GM12878 (cell line): ENCODE measurements at regions of chr3 and their contacts with region 1.

Region 1: GRCh38 chr3:44338010-44338827 is at the start of gene TCAIM:
- DNase-seq: peak; percentile 92
- ATAC-seq: peak; percentile 97
- H3K4me3 ChIP-seq: peak within 1 kb of the TSS; percentile 87
- H3K27ac ChIP-seq: peak within 1 kb of the TSS; percentile 95
- H3K4me1 ChIP-seq: no peaks in the 10 kb centered on the region
- H3K27me3 ChIP-seq: no peaks in the 10 kb centered on the region
- CTCF ChIP-seq: no peak
- EP300 ChIP-seq: 0 out of 4 replicates have a peak, but pooled peaks of 1 of the 2 experiments have one; percentile 15
- POLR2A ChIP-seq: peak; percentile 98
- RAD21 ChIP-seq: no peak
- polyA plus RNA-seq, gene TCAIM: 16.1 to 19.0 TPM

Region 2: DNA sequence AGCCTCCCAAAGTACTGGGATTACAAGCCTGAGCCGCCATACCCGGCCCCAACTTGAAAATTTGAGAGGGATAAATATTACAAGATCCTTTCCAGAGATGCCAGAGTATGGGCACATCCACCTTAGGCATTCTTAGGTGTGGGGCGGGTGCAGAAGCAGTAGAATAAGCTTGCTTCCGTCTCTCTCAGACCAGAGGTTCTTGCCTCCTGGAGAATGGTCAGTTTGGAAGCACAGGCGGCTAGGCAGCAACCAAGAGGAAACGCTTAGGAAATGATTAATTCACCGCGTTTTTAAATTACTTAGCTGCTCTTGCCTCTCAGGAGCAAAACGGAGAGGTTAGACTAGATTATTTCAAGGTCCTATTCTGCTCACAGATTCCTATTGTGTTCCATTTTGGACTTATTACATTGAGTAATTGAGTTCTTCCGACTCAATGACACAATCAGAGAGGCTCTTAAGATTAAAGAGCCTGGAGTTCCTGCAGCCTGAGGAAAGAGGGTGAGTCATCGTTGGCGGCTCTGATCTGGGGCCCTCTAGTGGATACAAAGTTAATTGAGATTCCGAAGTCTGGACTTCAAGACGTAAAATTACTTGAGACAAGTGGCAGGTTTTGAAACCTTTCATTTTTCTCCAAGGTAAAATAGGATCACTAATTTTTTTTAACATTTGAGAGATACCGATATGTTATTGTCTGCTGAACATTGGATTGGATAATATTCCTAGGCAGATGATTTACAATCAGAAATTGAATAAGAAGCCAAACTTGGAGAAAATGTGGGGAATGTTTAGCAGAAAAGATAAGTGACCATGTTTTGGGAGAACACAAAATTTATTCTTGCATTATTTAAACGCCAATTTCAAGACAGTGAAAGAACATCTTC is 102.4 kb before region 1 on chr3:
- CTCF ChIA-PET with region 1: no interaction called
- POLR2A ChIA-PET with region 1: no interaction called
- RAD21 ChIA-PET with region 1: no interaction called
- SMC1A ChIA-PET with region 1: no interaction called
- in situ Hi-C with region 1: no loop called
- intact Hi-C with region 1: no loop called
- DNase-seq: peak; percentile 11
- ATAC-seq: peak; percentile 90
- H3K4me3 ChIP-seq: no peak overlapping the region
- H3K27ac ChIP-seq: no peak overlapping the region
- H3K4me1 ChIP-seq: no peaks in the 10 kb centered on the region
- H3K27me3 ChIP-seq: no peaks in the 10 kb centered on the region
- CTCF ChIP-seq: peak; percentile 67 to 83 (median 68)
- EP300 ChIP-seq: no peak
- POLR2A ChIP-seq: no peak
- RAD21 ChIP-seq: peak; percentile 50

Region 3: GRCh38 chr3:44323341-44323955 is 14.8 kb before region 1 on chr3:
- CTCF ChIA-PET with region 1: interaction called, 14 read pairs
- POLR2A ChIA-PET with region 1: interaction called, 3 read pairs
- RAD21 ChIA-PET with region 1: interaction called, 5 read pairs
- SMC1A ChIA-PET with region 1: interaction called, 9 read pairs
- in situ Hi-C with region 1: no loop called
- intact Hi-C with region 1: no loop called
- DNase-seq: no peak
- ATAC-seq: peak; percentile 56
- H3K4me3 ChIP-seq: no peak overlapping the region
- H3K27ac ChIP-seq: no peak overlapping the region
- H3K4me1 ChIP-seq: no peaks in the 10 kb centered on the region
- H3K27me3 ChIP-seq: no peaks in the 10 kb centered on the region
- CTCF ChIP-seq: peak; percentile 73 to 83 (median 76)
- EP300 ChIP-seq: no peak
- POLR2A ChIP-seq: no peak
- RAD21 ChIP-seq: peak; percentile 98

Region 4: DNA sequence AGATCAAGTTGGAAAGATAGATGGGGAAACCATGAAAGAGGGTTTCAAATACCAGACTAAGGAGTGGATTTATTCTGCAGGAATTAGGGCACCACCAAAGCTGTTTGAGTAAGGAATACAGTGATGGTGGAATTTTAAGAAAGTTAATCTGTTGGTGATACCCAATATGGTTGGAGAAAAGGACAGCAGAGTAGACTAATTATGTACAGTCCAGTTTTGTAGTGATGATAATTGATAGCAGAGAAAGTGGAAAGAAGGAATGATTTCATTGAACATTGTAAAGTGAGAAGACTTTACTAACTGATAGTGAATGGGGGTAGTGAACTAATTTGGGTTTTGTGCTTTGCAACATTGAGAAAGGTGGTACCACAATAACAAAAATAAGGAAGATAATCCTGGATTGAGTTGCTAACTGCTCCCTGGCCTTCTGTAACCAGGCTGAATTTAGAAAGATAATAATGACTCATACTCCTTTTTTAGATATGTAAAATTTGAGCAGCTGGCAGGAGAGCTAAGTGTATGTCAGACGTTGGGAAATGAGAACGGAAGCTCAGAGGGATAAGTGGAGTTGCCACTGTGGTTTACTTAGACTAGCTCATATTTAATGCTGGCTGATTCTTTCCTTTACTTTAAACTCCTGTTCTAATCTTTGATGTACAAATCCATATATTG is 17.3 kb after region 1 on chr3:
- CTCF ChIA-PET with region 1: interaction called, 4 read pairs
- POLR2A ChIA-PET with region 1: interaction called, 6 read pairs
- RAD21 ChIA-PET with region 1: interaction called, 3 read pairs
- SMC1A ChIA-PET with region 1: interaction called, 10 read pairs
- in situ Hi-C with region 1: no loop called
- intact Hi-C with region 1: no loop called
- DNase-seq: no peak
- ATAC-seq: no peak
- H3K4me3 ChIP-seq: no peak overlapping the region
- H3K27ac ChIP-seq: no peak overlapping the region
- H3K4me1 ChIP-seq: no peaks in the 10 kb centered on the region
- H3K27me3 ChIP-seq: no peaks in the 10 kb centered on the region
- CTCF ChIP-seq: no peak
- EP300 ChIP-seq: no peak
- POLR2A ChIP-seq: no peak
- RAD21 ChIP-seq: no peak

Region 5: GRCh38 chr3:44363591-44363990 is 25.4 kb after region 1 on chr3:
- CTCF ChIA-PET with region 1: interaction called, 7 read pairs
- POLR2A ChIA-PET with region 1: interaction called, 8 read pairs
- RAD21 ChIA-PET with region 1: interaction called, 35 read pairs
- SMC1A ChIA-PET with region 1: interaction called, 40 read pairs
- in situ Hi-C with region 1: no loop called
- intact Hi-C with region 1: no loop called
- DNase-seq: no peak
- ATAC-seq: peak; percentile 90
- H3K4me3 ChIP-seq: no peak overlapping the region
- H3K27ac ChIP-seq: no peak overlapping the region
- H3K4me1 ChIP-seq: no peaks in the 10 kb centered on the region
- H3K27me3 ChIP-seq: no peaks in the 10 kb centered on the region
- CTCF ChIP-seq: no peak
- EP300 ChIP-seq: no peak
- POLR2A ChIP-seq: no peak
- RAD21 ChIP-seq: no peak

Region 6: GRCh38 chr3:44439499-44440295 is 101.5 kb after region 1 on chr3:
- CTCF ChIA-PET with region 1: interaction called, 19 read pairs
- POLR2A ChIA-PET with region 1: interaction called, 8 read pairs
- RAD21 ChIA-PET with region 1: interaction called, 34 read pairs
- SMC1A ChIA-PET with region 1: interaction called, 33 read pairs
- in situ Hi-C with region 1: no loop called
- intact Hi-C with region 1: loop called (anchors 1 kb)
- DNase-seq: peak; percentile 88
- ATAC-seq: peak; percentile 98
- H3K4me3 ChIP-seq: peak overlapping the region; percentile 35; the same call in 1 of the 2 replicates
- H3K27ac ChIP-seq: peak overlapping the region; percentile 92
- H3K4me1 ChIP-seq: peaks cover 25% of the 10 kb centered on the region
- H3K27me3 ChIP-seq: no peaks in the 10 kb centered on the region
- CTCF ChIP-seq: no peak
- EP300 ChIP-seq: peak; percentile 71 to 77; a peak in 3 of 4 replicates
- POLR2A ChIP-seq: peak; percentile 70; the same call in 1 of the 2 replicates
- RAD21 ChIP-seq: no peak

Region 7: GRCh38 chr3:44470430-44470829 is 132.2 kb after region 1 on chr3:
- CTCF ChIA-PET with region 1: no interaction called
- POLR2A ChIA-PET with region 1: interaction called, 4 read pairs
- RAD21 ChIA-PET with region 1: interaction called, 5 read pairs
- SMC1A ChIA-PET with region 1: interaction called, 10 read pairs
- in situ Hi-C with region 1: no loop called
- intact Hi-C with region 1: no loop called
- DNase-seq: no peak
- ATAC-seq: no peak
- H3K4me3 ChIP-seq: no peak overlapping the region
- H3K27ac ChIP-seq: no peak overlapping the region
- H3K4me1 ChIP-seq: 0 out of 2 replicates have a peak, but pooled peaks cover 2% of the 10 kb centered on the region
- H3K27me3 ChIP-seq: no peaks in the 10 kb centered on the region
- CTCF ChIP-seq: no peak
- EP300 ChIP-seq: no peak
- POLR2A ChIP-seq: no peak
- RAD21 ChIP-seq: no peak

Region 8: GRCh38 chr3:44510000-44510368 is 171.8 kb after region 1 on chr3:
- CTCF ChIA-PET with region 1: no interaction called
- POLR2A ChIA-PET with region 1: interaction called, 12 read pairs
- RAD21 ChIA-PET with region 1: interaction called, 14 read pairs
- SMC1A ChIA-PET with region 1: no interaction called
- in situ Hi-C with region 1: no loop called
- intact Hi-C with region 1: loop called (anchors 5 kb)
- DNase-seq: no peak
- ATAC-seq: peak; percentile 61
- H3K4me3 ChIP-seq: peak overlapping the region; percentile 81
- H3K27ac ChIP-seq: peak overlapping the region; percentile 81
- H3K4me1 ChIP-seq: peaks cover 8% of the 10 kb centered on the region
- H3K27me3 ChIP-seq: no peaks in the 10 kb centered on the region
- CTCF ChIP-seq: no peak
- EP300 ChIP-seq: no peak
- POLR2A ChIP-seq: no peak
- RAD21 ChIP-seq: no peak